ENCODE measurements at regions of chr12 and their contacts with region 1.

Region 1: GRCh38 chr12:47742253-47742825 is 16.3 kb downstream of the RAPGEF3 start:
- DNase-seq: peak in 1 of 2 donors; percentile 71
- ATAC-seq: peak in 2 of 4 donors; percentile 49 to 58
- H3K4me3 ChIP-seq: no peak overlapping the region
- H3K27ac ChIP-seq: no peak overlapping the region
- H3K4me1 ChIP-seq: peaks cover 7% of the 10 kb centered on the region
- H3K27me3 ChIP-seq: no peaks in the 10 kb centered on the region
- CTCF ChIP-seq: peak; percentile 91

Region 2: DNA sequence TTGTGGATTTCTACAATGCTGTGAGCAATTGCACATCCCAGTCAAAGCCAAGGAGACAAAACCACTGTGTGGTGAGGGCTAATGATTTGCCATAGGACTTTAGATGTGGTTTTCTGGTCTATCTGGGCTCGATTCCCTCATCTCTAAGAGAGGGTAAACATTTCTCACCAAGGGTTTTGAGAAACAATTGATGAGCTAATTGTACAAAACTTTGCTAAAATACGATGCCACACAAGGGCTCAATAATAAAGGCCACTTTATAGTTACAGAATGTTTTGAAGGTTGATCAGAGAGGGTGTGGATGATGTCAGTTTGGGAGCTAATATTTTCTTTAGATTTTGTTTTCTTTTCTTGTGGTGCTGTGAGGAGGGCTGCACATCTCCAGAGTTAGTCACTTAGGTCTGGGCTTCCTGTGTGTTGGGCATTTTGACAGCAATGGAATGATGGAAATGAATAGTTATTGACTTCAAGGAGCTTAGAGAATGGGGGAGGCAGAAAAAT is 855.7 kb before region 1 on chr12:
- intact Hi-C with region 1: no loop called
- DNase-seq: no peak
- ATAC-seq: no peak
- H3K4me3 ChIP-seq: no peak overlapping the region
- H3K27ac ChIP-seq: no peak overlapping the region
- H3K4me1 ChIP-seq: no peaks in the 10 kb centered on the region
- H3K27me3 ChIP-seq: no peaks in the 10 kb centered on the region
- CTCF ChIP-seq: no peak

Region 3: GRCh38 chr12:47616440-47616839 is 125.9 kb before region 1 on chr12:
- intact Hi-C with region 1: no loop called
- DNase-seq: no peak
- ATAC-seq: no peak
- H3K4me3 ChIP-seq: no peak overlapping the region
- H3K27ac ChIP-seq: no peak overlapping the region
- H3K4me1 ChIP-seq: no peaks in the 10 kb centered on the region
- H3K27me3 ChIP-seq: no peaks in the 10 kb centered on the region
- CTCF ChIP-seq: no peak

Region 4: GRCh38 chr12:47758834-47759690 is 16.7 kb after region 1 on chr12 and contains the start of gene RAPGEF3:
- intact Hi-C with region 1: loop called in 1 of 2 experiments (anchors 2 kb)
- DNase-seq: peak; percentile 87 to 91
- ATAC-seq: peak; percentile 91 to 96 (median 92)
- H3K4me3 ChIP-seq: peak within 1 kb of the TSS; percentile 72
- H3K27ac ChIP-seq: peak within 1 kb of the TSS; percentile 57
- H3K4me1 ChIP-seq: peaks cover 18% of the 10 kb centered on the region
- H3K27me3 ChIP-seq: no peaks in the 10 kb centered on the region
- CTCF ChIP-seq: peak; percentile 44
- total RNA-seq, gene RAPGEF3: 5.1 to 28.8 (median 11.7) TPM

Region 5: GRCh38 chr12:47767216-47767724 is 24.9 kb after region 1 on chr12:
- intact Hi-C with region 1: loop called in 1 of 2 experiments (anchors 2 kb)
- DNase-seq: peak in 1 of 2 donors; percentile 64
- ATAC-seq: peak; percentile 63 to 81 (median 70)
- H3K4me3 ChIP-seq: no peak overlapping the region
- H3K27ac ChIP-seq: no peak overlapping the region
- H3K4me1 ChIP-seq: peaks cover under 1% of the 10 kb centered on the region
- H3K27me3 ChIP-seq: no peaks in the 10 kb centered on the region
- CTCF ChIP-seq: peak; percentile 67